ENCODE measurements at regions of chr2 and their contacts with region 1.

Region 1: DNA sequence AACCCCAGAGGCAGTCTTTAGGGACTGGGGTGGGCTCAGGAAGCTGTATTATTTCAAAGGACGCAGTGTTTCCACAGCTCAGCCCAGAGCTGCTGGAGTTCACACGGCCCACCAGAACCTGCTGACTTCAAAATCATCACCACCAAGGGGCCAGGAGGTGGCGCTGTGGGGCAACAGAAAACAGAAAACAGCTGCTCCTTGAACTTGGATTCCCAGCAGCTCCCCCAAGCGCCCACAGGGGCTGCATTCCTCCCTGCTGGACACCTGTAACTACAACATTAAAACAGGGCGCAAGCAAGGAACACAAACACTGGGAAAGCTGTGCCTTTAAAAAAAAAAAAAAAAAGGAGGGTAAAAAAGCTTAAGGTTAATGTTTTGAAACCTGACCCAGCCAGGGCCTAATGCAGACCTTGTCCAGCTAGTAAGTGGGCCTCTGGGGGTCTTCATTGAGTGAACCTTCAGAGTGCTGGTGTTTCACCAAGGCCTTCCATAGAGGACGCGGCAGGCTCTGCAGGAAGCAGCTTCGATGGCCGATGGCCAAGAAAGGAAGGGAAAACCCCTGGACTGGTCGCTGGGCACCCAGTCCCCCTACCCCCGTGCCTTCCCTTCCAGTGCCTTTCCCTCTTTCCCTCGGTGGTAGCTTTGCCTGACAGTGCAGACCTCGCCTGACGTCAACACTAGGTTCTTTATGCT is 25.9 kb downstream of the MLPH start:
- DNase-seq: peak; percentile 72 to 88
- ATAC-seq: peak; percentile 70 to 86 (median 85)
- H3K4me3 ChIP-seq: no peak overlapping the region
- H3K4me3 Mint-ChIP-seq: no peak overlapping the region
- H3K27ac ChIP-seq: no peak overlapping the region
- H3K27ac Mint-ChIP-seq: no peak overlapping the region
- H3K4me1 ChIP-seq: no peaks in the 10 kb centered on the region
- H3K4me1 Mint-ChIP-seq: no peaks in the 10 kb centered on the region
- H3K27me3 ChIP-seq: no peaks in the 10 kb centered on the region
- H3K27me3 Mint-ChIP-seq: peaks cover 9 to 11% of the 10 kb centered on the region in 2 donors
- CTCF ChIP-seq: peak; percentile 78

Region 2: DNA sequence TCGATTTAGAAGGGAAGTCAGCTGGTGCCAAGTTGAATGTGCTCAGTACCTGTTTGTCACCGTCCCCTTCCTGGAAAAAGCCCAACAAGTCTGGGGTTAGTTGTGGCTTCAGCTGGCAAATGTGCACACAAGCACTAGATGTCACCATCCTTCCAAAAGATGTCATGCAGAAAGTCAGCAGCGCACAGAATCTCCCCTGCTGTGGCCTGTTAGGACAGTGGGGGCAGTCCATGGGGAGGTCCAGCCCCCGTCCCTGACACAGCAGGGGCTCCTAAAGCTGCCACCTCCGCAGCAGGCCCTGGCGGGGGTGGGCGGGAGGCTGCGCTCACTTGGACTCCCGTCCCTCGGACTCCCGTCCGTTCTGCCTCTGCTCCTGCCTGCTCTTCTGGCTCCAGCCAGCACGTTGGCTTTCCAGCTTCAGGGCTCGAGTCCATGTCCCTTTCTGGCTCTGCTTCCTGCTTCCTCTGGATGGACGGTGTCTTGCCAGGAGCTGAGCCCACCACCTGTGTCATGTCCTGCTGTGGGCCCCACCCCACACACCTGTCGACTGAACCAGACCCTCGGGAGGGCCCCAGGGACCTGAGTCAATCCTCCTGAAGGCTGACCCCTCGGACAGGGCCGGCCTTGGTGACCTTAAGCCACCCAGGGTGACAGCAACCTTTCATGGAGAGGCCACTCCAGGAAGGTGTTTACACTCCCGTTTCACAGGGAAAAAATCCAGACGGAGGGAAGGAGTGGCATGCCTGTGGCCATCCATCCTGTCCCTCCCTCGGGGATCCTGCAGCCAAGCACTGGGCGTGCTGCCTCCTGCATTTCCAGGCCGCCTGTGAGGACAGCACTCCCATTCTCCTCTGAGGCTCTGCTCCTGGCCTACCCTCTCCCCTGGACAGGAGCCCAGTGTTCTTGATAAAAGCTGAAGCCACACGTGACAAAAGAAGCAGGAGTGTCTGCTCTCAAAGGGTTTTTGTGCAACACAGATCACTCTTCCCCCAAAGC is 69.1 kb after region 1 on chr2:
- intact Hi-C with region 1: no loop called
- DNase-seq: peak in 1 of 2 donors; percentile 71
- ATAC-seq: peak; percentile 15 to 73 (median 73)
- H3K4me3 ChIP-seq: no peak overlapping the region
- H3K4me3 Mint-ChIP-seq: no peak overlapping the region
- H3K27ac ChIP-seq: no peak overlapping the region
- H3K27ac Mint-ChIP-seq: no peak overlapping the region
- H3K4me1 ChIP-seq: no peaks in the 10 kb centered on the region
- H3K4me1 Mint-ChIP-seq: no peaks in the 10 kb centered on the region
- H3K27me3 ChIP-seq: no peaks in the 10 kb centered on the region
- H3K27me3 Mint-ChIP-seq: peaks cover 0 to 4% of the 10 kb centered on the region in 2 donors
- CTCF ChIP-seq: no peak

Region 3: DNA sequence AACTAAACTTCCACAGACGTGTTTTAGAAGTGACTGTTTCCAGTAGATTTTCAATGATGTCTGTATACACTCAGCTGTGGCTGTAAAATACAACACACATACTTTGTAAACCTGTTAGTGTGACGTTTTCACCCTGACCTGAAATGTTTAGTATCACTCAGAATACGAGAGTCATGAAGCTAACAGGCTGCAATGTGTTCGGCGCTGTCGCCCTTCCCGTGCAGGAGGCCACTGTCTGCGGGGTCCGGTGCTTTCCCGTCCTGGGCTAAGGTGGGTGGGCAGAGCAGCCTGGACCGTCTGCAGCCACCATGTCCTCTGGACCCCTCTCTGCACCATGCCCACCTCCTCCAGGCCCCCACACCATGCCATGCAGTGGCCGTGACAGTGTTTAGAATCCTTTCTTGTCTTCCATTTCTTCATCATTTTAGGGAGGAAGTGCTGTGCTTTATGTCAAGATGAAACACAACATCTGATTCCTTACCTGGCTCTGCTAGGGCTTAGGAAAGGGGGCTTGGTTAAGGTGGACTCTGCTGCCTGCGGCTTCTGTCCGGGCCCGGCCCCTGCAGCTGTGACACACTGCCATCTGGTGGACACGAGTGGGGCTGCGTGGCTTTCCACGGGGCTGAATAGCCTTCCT is 231.8 kb after region 1 on chr2:
- intact Hi-C with region 1: loop called (anchors 2 kb)
- DNase-seq: peak; percentile 75 to 86
- ATAC-seq: peak; percentile 77 to 89 (median 86)
- H3K4me3 ChIP-seq: no peak overlapping the region
- H3K4me3 Mint-ChIP-seq: no peak overlapping the region
- H3K27ac ChIP-seq: peak overlapping the region; percentile 31
- H3K27ac Mint-ChIP-seq: peak overlapping the region; percentile 76 to 86
- H3K4me1 ChIP-seq: peaks cover 13% of the 10 kb centered on the region
- H3K4me1 Mint-ChIP-seq: peaks cover 30 to 40% of the 10 kb centered on the region in 2 donors
- H3K27me3 ChIP-seq: no peaks in the 10 kb centered on the region
- H3K27me3 Mint-ChIP-seq: no peaks in the 10 kb centered on the region
- CTCF ChIP-seq: peak; percentile 98

Region 4: GRCh38 chr2:237774802-237775553 is 262.1 kb after region 1 on chr2:
- intact Hi-C with region 1: loop called (anchors 1 kb)
- DNase-seq: peak; percentile 33 to 64
- ATAC-seq: peak; percentile 67 to 82 (median 78)
- H3K4me3 ChIP-seq: no peak overlapping the region
- H3K4me3 Mint-ChIP-seq: no peak overlapping the region
- H3K27ac ChIP-seq: no peak overlapping the region
- H3K27ac Mint-ChIP-seq: peak overlapping the region; percentile 64 to 70
- H3K4me1 ChIP-seq: no peaks in the 10 kb centered on the region
- H3K4me1 Mint-ChIP-seq: peaks cover 8 to 11% of the 10 kb centered on the region in 2 donors
- H3K27me3 ChIP-seq: no peaks in the 10 kb centered on the region
- H3K27me3 Mint-ChIP-seq: no peaks in the 10 kb centered on the region
- CTCF ChIP-seq: peak; percentile 69